ENCODE measurements at regions of chr12 and their contacts with region 1.

Region 1: DNA sequence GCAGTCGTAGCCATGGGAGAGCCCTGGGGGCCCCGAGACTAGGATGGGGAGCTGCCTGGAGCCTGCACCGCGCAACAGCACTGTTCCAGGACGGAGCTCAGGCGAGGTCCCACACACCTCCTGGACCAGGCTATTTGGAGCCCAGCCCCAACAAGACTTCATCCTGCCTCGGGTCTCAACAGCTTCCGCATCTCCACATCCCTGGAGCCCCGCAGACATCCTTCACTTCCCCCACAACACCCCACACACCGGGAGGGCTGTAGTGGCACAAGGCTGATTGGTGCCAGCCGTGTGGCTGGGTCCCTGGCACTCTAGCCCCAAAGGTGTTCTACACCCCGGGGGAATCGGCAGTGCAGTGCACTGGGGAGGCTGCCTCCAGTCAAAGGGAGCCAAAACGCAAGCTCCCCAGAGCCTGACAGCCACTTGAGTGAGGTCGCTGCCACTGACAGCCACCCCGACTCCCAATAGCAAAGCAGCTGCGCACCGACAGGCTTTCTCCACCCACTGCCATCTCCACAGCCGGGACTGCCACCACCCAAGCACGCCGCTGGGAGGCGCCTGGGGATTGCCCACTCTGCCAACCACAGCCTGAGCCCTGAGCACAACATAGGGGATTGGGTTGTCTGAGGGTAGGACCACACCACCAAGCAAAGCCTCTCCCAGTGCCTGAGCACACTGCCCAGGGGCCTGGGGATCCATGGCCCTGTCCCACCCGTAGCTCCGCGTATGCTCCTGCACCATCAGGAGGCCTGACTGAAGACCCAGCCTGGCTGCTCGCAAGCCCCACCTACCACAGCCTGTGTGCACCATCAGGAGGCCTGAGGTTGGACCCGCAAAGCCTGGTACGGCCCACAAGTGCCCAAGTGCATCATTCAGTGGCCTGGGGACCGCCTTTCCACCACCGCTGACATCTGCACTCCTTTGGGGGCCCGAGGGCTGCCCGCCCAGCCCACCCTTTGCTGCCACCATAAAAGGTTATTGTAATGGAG is 13.2 kb upstream of the KLRF1 start:
- DNase-seq: peak; percentile 93
- H3K4me3 Mint-ChIP-seq: peak overlapping the region; percentile 77
- H3K27ac Mint-ChIP-seq: no peak overlapping the region
- H3K4me1 Mint-ChIP-seq: peaks cover 9% of the 10 kb centered on the region
- H3K27me3 Mint-ChIP-seq: no peaks in the 10 kb centered on the region

Region 2: DNA sequence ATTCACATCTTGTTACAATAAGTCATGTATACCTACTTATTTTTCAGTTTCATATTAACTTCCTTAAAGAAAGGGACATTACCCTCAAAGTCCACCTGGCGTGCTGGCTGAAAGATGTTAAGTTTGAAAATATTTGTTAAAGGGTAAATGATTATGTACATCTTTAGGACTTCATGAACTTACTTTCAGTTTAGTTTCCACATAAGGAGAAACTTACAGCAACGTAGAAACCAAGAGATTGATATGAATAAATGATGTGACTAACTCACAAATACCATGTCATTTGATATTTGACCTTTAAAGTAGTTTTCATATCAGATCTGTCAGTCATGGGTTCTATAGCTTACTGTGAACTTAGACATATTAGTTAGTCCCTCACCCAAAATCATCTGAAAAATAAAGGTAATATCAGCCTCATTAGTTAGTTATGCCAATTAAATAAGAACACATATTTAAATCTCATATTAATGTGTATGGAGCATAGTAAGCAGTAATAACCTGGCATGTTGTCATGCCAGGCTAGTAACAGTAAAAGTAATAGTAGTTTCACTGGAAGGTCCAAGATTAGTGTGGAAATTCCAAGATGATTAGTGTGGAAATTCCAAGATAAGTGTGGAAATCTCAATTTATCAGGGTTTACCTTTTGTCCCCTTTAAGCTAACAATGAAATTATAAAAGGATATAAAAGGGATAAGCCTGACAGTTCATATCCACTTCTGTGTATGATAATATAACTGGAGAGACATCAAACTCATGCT is 146.5 kb before region 1 on chr12:
- CTCF ChIA-PET with region 1: no interaction called
- intact Hi-C with region 1: no loop called
- DNase-seq: peak; percentile 50
- H3K4me3 Mint-ChIP-seq: peak overlapping the region; percentile 90
- H3K27ac Mint-ChIP-seq: peak overlapping the region; percentile 97
- H3K4me1 Mint-ChIP-seq: peaks cover 56% of the 10 kb centered on the region
- H3K27me3 Mint-ChIP-seq: no peaks in the 10 kb centered on the region

Region 3: DNA sequence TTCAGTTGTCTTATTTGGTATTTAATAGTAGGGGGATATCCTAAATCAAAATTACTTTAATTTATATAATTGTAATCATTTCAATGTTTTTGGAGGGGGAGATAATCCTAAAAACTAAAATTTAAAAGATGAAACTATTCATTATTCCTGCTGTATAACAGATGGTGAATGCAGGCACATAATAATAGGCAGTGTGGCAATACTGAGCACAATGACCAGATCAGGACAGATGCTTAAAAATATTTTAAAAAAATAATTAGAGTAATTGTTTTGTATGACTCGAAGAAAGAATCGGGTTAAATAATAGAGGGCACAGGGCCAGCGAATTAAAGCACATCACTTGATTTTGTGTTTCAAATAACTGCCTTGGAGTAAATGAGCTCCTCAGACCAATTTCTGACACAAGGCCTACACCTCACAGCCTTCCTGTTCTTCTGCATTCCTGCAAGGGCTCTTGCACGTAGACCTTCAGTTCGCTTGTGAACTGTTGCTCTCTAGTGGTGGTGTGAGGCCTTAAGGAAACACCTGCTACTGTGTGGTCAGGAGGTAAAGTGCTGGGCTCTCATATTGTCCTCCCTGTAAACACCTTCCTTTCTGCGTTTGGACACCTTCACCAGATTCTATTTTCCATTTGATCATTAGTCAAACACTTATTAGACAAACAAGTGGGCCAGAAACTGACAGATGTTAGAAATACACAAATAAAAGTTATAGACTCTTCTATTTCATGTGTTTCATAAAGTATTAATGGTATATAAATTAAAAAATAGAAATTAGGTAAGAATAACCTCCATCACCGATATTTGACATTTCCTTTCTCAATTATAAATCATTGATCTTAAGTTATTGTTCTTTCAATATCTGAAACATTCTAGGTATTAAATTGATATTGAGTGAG is 16.1 kb before region 1 on chr12:
- CTCF ChIA-PET with region 1: interaction called, 30 read pairs
- intact Hi-C with region 1: no loop called
- DNase-seq: peak; percentile 84
- H3K4me3 Mint-ChIP-seq: peak overlapping the region; percentile 0
- H3K27ac Mint-ChIP-seq: peak overlapping the region; percentile 98
- H3K4me1 Mint-ChIP-seq: peaks cover 40% of the 10 kb centered on the region
- H3K27me3 Mint-ChIP-seq: no peaks in the 10 kb centered on the region

Region 4: GRCh38 chr12:9843416-9843815 is 29.3 kb after region 1 on chr12:
- CTCF ChIA-PET with region 1: no interaction called
- intact Hi-C with region 1: no loop called
- DNase-seq: no peak
- H3K4me3 Mint-ChIP-seq: no peak overlapping the region
- H3K27ac Mint-ChIP-seq: no peak overlapping the region
- H3K4me1 Mint-ChIP-seq: no peaks in the 10 kb centered on the region
- H3K27me3 Mint-ChIP-seq: no peaks in the 10 kb centered on the region

Region 5: GRCh38 chr12:9906873-9907272 is 92.8 kb after region 1 on chr12:
- CTCF ChIA-PET with region 1: interaction called, 27 read pairs
- intact Hi-C with region 1: no loop called
- DNase-seq: peak; percentile 49
- H3K4me3 Mint-ChIP-seq: no peak overlapping the region
- H3K27ac Mint-ChIP-seq: peak overlapping the region; percentile 68
- H3K4me1 Mint-ChIP-seq: peaks cover 21% of the 10 kb centered on the region
- H3K27me3 Mint-ChIP-seq: no peaks in the 10 kb centered on the region

Region 6: GRCh38 chr12:9940375-9940774 is 126.3 kb after region 1 on chr12:
- CTCF ChIA-PET with region 1: interaction called, 4 read pairs
- intact Hi-C with region 1: loop called (anchors 1 kb)
- DNase-seq: peak; percentile 28
- H3K4me3 Mint-ChIP-seq: no peak overlapping the region
- H3K27ac Mint-ChIP-seq: no peak overlapping the region
- H3K4me1 Mint-ChIP-seq: peaks cover 23% of the 10 kb centered on the region
- H3K27me3 Mint-ChIP-seq: no peaks in the 10 kb centered on the region

Region 7: GRCh38 chr12:10140001-10140400 is 325.9 kb after region 1 on chr12:
- CTCF ChIA-PET with region 1: interaction called, 21 read pairs
- intact Hi-C with region 1: loop called (anchors 1 kb)
- DNase-seq: peak; percentile 73
- H3K4me3 Mint-ChIP-seq: no peak overlapping the region
- H3K27ac Mint-ChIP-seq: no peak overlapping the region
- H3K4me1 Mint-ChIP-seq: peaks cover 2% of the 10 kb centered on the region
- H3K27me3 Mint-ChIP-seq: peaks cover 2% of the 10 kb centered on the region

Region 8: DNA sequence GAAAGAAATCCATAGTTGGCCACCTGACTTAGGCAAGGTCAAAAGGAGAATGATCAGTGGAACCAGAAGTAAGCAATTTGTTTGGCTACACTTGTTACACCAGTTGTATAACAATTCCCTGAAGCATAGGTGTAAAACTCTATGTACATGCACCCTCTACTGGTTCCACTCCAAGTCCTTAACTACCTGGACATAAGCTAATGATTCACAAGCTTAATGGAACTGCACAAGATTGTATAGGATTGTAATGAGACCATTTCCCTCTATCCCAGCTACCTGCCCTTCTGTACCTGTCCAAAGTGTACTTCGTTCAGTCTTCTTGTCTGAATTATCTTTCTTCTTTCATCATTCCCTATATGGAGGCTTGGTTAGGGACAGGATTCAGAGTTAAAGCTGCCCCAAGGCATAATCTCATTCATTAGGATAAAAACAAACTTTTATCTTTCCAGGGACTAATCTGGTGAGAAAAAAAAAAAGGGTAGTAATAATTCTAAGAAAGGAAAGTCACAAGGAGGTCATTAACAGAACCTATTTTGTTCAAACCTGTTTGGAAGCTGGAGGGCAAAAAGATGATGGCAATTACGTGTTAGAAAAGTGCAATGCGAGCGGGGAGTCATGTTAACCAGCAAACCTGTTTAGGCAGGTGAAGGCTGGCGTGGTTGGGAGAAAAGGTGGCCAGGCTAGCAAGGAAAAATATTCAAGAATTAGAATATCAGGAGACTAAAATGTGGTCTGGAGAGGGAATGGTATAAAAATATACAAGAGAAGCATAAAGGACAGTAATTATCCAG is 361.9 kb after region 1 on chr12:
- CTCF ChIA-PET with region 1: no interaction called
- intact Hi-C with region 1: no loop called
- DNase-seq: no peak
- H3K4me3 Mint-ChIP-seq: no peak overlapping the region
- H3K27ac Mint-ChIP-seq: no peak overlapping the region
- H3K4me1 Mint-ChIP-seq: no peaks in the 10 kb centered on the region
- H3K27me3 Mint-ChIP-seq: peaks cover 5% of the 10 kb centered on the region

Measured in activated naive CD4-positive, alpha-beta T cell treated with anti-CD3 and anti-CD28 coated beads for 36 hours (primary cell).